AG04450 (cell line): ENCODE measurements at regions of chr22 and their contacts with region 1.

Region 1: DNA sequence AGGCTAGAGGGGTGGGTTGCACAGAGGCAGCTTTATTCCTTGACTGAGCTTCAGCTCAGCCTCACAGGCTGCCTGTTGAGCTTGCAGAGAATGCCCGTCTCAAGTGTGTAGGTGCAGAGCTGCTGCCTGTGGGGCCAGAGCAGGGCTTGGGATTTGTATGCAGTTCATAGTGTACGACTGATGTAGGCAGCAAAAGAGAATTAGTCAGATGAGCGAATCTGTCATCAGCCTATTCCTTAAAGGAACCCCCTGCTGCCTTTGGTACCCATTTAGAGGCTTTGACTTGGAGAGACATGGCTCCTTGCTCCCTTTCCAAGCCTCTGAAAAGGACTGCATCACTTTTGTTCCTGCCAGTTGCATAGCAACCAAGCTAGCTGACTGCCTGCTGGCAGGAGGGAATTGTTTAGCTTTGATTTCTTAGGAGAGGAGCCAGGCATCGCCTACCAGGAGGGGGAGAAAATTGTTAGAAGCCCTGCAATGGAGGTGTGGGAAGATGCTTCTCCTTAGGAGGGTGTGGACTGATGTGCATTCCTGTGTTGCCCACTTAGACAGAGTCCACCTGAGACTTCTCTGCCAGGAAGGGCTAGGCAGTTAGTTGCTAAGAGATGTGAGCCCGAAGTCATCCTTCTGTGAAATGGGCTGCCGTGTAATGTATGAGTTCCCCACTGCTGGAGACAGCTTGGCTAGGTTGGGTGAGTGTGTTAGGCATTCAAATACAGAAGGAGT is 10.9 kb downstream of the ACO2 start:
- DNase-seq: no peak
- H3K4me3 ChIP-seq: peak overlapping the region; percentile 23
- H3K27ac ChIP-seq: peak overlapping the region; percentile 94
- H3K27me3 ChIP-seq: no peaks in the 10 kb centered on the region
- CTCF ChIP-seq: peak; percentile 18; the same call in 1 of the 2 replicates

Region 2: GRCh38 chr22:41468381-41469217 is 11.2 kb before region 1 on chr22 and contains the starts of genes ACO2 and PHF5A:
- CTCF ChIA-PET with region 1: no interaction called
- POLR2A ChIA-PET with region 1: interaction called, 23 read pairs
- DNase-seq: peak; percentile 93
- H3K4me3 ChIP-seq: peak within 1 kb of the TSS; percentile 98
- H3K27ac ChIP-seq: peak within 1 kb of the TSS; percentile 86
- H3K27me3 ChIP-seq: no peaks in the 10 kb centered on the region
- CTCF ChIP-seq: no peak
- polyA plus RNA-seq, gene ACO2: 32.2 and 44.4 TPM in 2 replicates
- polyA plus RNA-seq, gene PHF5A: 47.9 and 53.8 TPM in 2 replicates

Region 3: GRCh38 chr22:41603873-41604332 is 124.1 kb after region 1 on chr22:
- CTCF ChIA-PET with region 1: no interaction called
- POLR2A ChIA-PET with region 1: no interaction called
- DNase-seq: no peak
- H3K4me3 ChIP-seq: no peak overlapping the region
- H3K27ac ChIP-seq: no peak overlapping the region
- H3K27me3 ChIP-seq: no peaks in the 10 kb centered on the region
- CTCF ChIP-seq: no peak